GM18951 (cell line): ENCODE measurements at regions of chr14 and their contacts with region 1.

Region 1: DNA sequence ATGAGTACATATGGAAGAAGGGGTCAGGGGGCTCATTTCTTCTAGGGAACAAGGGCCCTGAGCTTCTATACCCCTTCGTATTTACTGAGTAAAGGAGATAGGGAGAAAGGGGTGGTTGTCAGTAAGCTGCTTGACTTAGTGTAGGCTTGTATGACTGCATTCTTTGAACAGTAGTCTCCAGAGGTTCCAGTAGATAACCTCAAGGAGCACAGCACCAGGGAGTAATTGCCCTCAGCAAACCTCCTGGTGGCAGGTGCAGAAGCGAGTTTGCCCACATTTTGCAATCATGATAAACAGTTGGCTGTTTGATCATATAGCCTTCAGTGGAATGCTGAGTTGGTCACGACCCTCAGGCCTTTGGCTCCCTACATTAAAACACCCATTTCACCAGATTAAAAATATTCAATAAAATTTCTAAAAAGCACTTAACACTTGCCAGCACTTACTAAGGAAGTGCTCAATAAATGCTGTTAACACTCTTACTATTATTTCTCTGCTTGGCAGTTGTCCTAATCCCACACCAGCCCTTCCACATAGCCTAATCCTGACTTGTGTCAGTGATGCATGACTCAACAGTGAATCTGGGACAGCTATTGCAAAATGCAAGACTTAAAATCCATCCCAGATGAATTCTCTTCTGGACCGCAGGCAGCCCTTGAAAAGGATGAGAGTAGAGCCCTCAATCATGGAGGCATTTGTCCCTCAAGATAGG is 3.7 kb upstream of the DHRS4L2 start:
- POLR2A ChIP-seq: no peak

Region 2: GRCh38 chr14:24093901-24094761 is 109.1 kb after region 1 on chr14 and contains the start of gene PCK2:
- in situ Hi-C with region 1: loop called (anchors 25 kb)
- POLR2A ChIP-seq: peak; percentile 98

Region 3: GRCh38 chr14:24327303-24327702 is 342.3 kb after region 1 on chr14:
- in situ Hi-C with region 1: no loop called
- POLR2A ChIP-seq: no peak